ENCODE measurements at regions of chr1 and their contacts with region 1.

Region 1: DNA sequence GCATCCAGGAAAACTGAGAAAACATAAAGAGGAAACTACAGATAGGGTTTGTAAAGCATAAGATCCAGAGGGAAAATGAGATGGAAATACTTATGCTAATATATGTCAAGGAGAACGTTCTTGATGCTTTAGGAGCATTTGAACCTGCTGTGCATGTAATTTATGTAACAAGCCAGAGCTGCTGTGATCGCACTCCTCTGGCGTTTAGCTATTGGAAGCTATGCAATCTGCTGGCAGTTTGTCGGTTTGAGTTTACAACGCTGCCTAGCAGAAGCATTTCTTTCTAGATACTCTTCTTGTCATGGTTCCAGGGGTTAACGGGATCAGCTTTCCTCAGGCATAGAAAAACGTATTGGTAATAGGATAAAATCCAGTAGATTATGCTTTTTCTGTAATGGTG is 182.7 kb downstream of the KCNH1 start:
- DNase-seq: no peak
- H3K4me3 Mint-ChIP-seq: no peak overlapping the region
- H3K27ac Mint-ChIP-seq: no peak overlapping the region
- H3K4me1 Mint-ChIP-seq: no peaks in the 10 kb centered on the region
- H3K27me3 Mint-ChIP-seq: no peaks in the 10 kb centered on the region
- CTCF ChIP-seq: peak; percentile 15

Region 2: DNA sequence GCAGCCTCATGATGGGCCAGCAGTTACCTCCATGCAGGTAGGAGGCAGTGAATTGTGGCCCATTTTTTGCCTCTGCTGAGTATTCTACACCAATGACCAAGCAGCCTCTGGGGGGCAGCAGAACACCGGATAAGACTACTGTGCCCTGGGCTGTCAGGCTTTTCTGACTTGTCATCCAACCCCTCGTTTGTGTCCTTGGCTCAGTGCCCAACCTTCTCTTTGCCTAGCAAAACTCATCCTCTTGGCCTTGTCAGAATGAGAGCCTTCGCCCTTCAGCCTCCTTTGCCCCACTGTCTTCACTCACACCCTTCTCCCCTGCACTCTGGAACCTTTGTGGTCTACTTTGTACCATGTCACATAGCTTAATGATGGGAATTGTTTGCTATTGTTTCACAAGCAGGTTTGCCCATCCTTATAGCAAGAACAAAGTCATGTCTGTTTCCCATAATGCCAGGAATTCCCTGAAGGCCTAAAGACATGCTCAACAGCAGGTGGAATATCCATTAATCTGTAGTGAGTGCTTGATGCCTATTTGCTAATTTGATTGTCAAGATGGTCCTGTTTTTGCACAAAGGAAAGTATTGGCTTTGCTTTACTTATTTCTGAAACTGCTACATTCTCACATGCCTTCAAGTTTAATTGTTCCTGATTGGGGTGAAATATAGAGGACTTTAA is 366.7 kb before region 1 on chr1:
- CTCF ChIA-PET with region 1: interaction called, 3 read pairs
- intact Hi-C with region 1: loop called (anchors 1 kb)
- DNase-seq: peak; percentile 92
- H3K4me3 Mint-ChIP-seq: no peak overlapping the region
- H3K27ac Mint-ChIP-seq: no peak overlapping the region
- H3K4me1 Mint-ChIP-seq: no peaks in the 10 kb centered on the region
- H3K27me3 Mint-ChIP-seq: no peaks in the 10 kb centered on the region
- CTCF ChIP-seq: peak; percentile 70

Region 3: DNA sequence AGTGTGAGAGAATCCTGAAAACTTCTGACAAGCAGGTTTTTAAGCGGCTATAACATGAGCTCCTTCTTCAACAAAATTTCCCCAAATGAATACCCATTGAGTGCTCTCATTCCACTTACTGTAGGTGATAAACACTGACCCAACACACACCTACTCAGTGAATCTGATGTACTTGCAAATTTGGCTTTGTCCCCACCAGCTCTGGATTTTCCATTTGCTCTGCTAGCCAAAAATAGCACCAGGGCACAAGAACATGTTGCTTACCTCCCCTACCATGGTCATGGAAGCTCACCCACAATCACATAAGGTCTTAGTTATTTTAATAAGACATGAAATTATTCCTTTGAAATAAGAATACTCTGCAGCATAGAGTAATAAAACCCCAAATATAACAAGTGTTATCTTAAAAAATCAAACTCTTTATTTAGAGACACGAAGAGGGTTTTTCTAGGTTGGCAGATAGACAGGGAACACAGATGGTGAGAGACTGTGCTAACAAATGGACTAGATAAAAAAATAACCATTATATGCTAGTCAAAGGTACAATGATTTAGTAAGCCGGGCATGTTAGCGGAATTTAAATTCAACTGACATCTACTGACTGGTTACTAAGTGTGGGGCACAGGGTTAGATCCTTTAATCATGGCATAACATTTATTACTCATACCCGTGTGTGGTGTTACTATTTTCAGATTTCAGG is 109.2 kb before region 1 on chr1:
- CTCF ChIA-PET with region 1: no interaction called
- intact Hi-C with region 1: no loop called
- DNase-seq: no peak
- H3K4me3 Mint-ChIP-seq: no peak overlapping the region
- H3K27ac Mint-ChIP-seq: no peak overlapping the region
- H3K4me1 Mint-ChIP-seq: no peaks in the 10 kb centered on the region
- H3K27me3 Mint-ChIP-seq: peaks cover 7% of the 10 kb centered on the region
- CTCF ChIP-seq: no peak

Measured in Calu3 (cell line).